Ascending aorta (tissue), 2 donors: ENCODE measurements at regions of chr12 and their contacts with region 1.

Region 1: DNA sequence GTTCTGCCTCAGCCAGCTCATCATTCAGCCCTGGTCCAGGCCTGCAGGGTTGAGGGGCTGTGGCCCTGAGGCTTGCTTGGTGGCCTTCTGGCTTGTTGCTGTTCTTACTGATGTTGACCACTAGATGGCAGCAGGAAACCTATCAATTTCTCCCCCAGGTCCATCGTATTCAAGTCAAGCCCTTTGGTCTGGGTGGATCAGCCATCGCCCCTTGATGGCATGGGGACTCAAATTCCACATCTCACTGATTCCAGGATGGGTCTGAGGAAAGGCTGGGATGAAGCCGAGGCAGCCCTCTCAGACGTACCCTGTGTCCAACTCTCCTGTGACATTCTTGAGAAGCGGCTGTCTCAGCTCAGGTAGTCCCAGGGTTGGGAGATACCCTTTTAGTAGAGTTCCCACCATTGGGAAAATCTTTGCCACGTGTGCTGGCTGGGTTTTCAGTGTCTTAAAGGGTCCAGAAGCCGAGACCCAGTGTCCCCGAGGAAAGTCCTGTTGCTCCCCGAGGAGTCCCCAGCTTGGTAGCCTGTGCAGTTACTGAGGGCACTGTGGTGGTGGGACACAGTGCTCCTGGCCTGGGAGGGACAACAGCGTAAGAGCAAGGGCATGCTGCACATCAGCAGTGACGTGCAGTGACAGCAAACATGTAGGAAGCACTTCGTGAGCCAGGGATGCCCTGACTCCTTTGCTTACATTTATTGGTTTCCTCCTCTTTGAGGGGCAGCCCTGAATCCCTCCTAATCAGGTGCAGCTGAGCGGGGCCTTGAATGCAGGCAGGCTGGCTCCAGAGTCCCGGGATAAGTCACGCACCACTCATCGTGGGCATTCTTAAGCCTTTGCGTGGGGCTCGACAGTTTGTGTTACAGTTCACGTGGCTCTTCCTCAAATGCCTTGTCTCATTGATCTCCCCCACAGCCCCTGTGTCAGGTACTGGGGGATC is 58.6 kb downstream of the TSPAN9 start:
- DNase-seq: no peak
- H3K4me3 ChIP-seq: no peak overlapping the region
- H3K27ac ChIP-seq: no peak overlapping the region
- H3K4me1 ChIP-seq: peaks cover 0 to 35% of the 10 kb centered on the region in 2 donors
- H3K27me3 ChIP-seq: no peaks in the 10 kb centered on the region
- CTCF ChIP-seq: peak; percentile 78 to 85 (median 82)

Region 2: GRCh38 chr12:3150931-3151835 is 15.4 kb after region 1 on chr12:
- intact Hi-C with region 1: loop called (anchors 2 kb)
- DNase-seq: no peak
- H3K4me3 ChIP-seq: peak overlapping the region; percentile 33 to 47
- H3K27ac ChIP-seq: peak overlapping the region; percentile 85 to 89
- H3K4me1 ChIP-seq: peaks cover 24 to 49% of the 10 kb centered on the region in 2 donors
- H3K27me3 ChIP-seq: no peaks in the 10 kb centered on the region
- CTCF ChIP-seq: no peak

Region 3: DNA sequence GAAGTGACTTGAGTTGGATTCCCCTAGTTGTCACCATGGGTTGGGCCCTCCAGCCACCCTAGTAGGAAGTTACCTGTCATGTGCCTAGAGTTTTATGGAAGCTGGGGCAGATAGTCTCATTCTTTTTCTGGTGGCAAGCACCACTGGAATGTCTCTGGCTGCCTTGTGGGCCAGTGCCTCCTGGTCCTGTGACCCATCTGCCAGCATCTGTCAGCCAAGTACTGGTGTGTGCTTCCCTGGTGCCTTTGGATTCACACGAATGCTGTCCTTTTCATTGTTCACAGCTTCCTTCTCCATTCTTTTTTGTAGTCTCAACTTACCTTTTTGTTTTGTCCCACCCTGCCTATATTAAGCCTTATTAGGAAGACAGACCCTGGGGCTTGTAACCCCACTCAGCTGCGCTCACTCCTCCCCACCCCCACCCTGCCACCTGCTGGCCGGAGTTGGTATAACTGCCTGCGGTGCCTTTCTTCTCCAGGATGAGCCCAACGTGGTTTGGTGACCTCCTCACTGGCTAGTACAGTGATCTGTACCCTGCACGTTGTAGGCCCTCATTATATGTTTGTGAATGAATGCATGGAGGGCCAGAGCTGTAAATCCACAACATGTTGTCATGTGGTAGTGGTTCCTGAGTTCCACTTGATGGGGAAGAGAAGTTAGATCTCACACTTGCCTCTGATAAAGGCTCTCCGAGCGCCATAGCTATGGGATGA is 67.1 kb after region 1 on chr12:
- intact Hi-C with region 1: loop called (anchors 1 kb)
- DNase-seq: peak in 1 of 2 donors; percentile 76
- H3K4me3 ChIP-seq: no peak overlapping the region
- H3K27ac ChIP-seq: no peak overlapping the region
- H3K4me1 ChIP-seq: peaks cover 6 to 36% of the 10 kb centered on the region in 2 donors
- H3K27me3 ChIP-seq: no peaks in the 10 kb centered on the region
- CTCF ChIP-seq: peak; percentile 79 to 94 (median 94)

Region 4: DNA sequence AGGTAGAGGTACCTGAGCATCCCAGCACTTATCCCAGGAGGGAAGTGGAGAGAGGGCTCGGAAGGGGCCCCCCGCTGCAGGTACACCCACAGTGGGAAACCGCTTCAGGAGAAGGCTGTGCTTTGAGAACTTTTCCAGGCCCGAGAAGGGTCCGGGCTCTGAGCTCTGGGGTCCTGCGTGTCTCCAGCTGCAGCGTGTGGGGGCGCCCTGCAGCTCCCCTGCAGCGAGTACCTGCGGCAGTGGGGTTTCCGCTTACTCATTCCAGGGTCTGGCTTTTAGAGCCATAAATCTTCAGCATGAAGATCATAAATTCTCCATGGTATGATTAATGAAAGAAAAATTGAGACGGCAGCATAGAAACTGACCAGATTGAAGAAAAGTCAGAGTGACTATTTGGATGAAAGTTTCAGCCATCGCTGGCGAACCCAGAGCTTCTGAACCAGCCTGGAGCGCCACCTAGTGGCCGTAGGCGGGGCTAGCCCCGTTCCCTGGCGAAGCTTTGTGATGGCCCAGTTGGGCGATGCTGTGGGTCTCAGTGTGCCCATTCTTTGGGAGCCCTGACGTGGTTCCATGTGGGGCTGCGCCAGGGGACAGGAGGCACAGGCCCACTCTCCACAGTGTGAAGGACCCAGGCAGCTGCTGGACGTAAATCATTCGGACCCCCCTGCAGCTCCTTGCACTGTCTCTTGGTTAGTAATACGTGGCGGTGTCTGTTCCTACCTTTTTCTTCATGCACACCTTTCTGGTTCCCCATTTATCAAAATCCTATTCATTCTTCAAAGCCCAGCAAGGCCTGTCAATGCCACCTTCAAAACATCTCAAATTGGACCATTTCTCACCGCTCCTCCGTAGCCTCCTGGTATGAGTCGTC is 139.6 kb after region 1 on chr12:
- intact Hi-C with region 1: loop called (anchors 1 kb)
- DNase-seq: peak in 1 of 2 donors; percentile 88
- H3K4me3 ChIP-seq: no peak overlapping the region
- H3K27ac ChIP-seq: no peak overlapping the region
- H3K4me1 ChIP-seq: no peaks in the 10 kb centered on the region
- H3K27me3 ChIP-seq: no peaks in the 10 kb centered on the region
- CTCF ChIP-seq: peak; percentile 95 to 96 (median 96)

Region 5: DNA sequence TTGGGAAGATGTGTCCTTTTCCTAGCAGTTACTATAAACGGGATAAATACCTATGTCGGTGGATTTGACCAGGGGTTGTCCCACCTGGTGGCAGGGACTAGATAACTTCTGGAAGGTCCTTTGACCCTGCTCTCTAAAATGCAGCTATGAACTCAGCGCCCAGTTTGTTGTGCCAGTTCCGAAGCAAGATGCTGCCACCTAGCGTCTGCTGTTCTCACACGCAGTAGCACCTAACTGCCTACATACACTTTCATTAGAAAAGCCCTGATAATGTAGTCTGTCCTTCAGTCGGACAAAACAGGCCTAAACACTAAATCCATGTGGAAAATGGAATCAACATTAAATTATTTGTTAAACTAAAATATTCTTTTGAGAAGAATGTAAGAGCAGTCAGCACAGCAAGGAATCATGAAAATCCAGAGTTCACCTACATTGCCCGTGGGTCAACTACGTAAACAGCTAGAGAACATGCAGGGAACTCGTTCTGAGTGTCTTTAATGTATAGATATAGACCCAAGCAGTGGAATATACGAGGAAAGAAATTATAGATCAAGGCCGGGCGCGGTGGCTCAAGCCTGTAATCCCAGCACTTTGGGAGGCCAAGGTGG is 668.2 kb after region 1 on chr12:
- intact Hi-C with region 1: loop called (anchors 10 kb)
- DNase-seq: peak in 1 of 2 donors; percentile 78
- H3K4me3 ChIP-seq: no peak overlapping the region
- H3K27ac ChIP-seq: no peak overlapping the region
- H3K4me1 ChIP-seq: no peaks in the 10 kb centered on the region
- H3K27me3 ChIP-seq: no peaks in the 10 kb centered on the region
- CTCF ChIP-seq: peak; percentile 44 to 77 (median 53)